ENCODE measurements at regions of chr9 and their contacts with region 1.

Region 1: DNA sequence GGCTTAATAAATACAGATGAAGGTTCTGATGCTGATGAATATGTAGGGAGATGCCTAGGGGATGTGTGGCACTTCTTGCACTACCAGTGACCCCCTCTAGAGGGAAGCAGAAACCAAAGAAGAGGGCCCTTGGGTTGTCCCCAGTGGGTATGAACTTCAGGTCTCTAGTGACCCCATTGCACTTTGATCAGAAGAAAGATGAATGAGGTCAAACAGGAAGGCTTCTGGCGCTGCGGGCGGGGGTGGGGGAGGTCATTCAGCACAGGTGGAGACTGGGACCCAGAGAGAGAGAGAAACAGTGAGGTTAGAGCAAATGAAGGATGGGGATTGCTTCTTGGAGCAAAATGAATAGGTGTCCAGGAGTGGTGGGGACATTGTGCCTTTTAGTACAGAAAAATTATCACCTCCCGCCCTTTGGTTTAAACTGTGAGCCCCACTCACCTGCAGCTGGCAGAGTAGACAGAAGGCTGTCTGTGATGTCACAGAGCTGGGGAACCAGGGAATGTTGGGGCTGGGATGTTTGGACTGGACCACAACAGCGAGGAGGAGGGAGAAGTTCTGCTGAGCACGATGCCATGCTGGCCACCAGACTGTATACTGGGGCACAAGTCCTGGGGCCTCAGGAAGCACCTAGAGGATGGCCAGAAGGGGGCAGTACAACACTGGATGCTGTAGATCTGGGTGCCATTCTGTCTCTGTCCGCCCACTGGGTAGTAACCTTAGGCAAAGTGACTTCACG is at the start of gene TEX48:
- DNase-seq: peak; percentile 64
- H3K4me3 ChIP-seq: peak within 1 kb of the TSS in 1 of 2 experiments; percentile 21; a peak in 1 of 4 replicates
- H3K27ac ChIP-seq: peak within 1 kb of the TSS in 1 of 2 experiments; percentile 23; a peak in 2 of 4 replicates
- H3K4me1 ChIP-seq: peaks cover 0 to 17% of the 10 kb centered on the region in 2 experiments; a peak in 3 of 4 replicates
- H3K27me3 ChIP-seq: no peaks in the 10 kb centered on the region
- CTCF ChIP-seq: peak; percentile 72
- EP300 ChIP-seq: no peak
- RAD21 ChIP-seq: peak; percentile 78
- polyA plus RNA-seq, gene TEX48: 0.41 and 0.46 TPM in 2 replicates

Region 2: GRCh38 chr9:114551883-114552685 is 129.7 kb before region 1 on chr9:
- CTCF ChIA-PET with region 1: no interaction called
- POLR2A ChIA-PET with region 1: no interaction called
- DNase-seq: peak; percentile 26
- H3K4me3 ChIP-seq: no peak overlapping the region
- H3K27ac ChIP-seq: peak overlapping the region in 1 of 2 experiments; percentile 86; a peak in 2 of 4 replicates
- H3K4me1 ChIP-seq: peaks cover 0 to 11% of the 10 kb centered on the region in 2 experiments; a peak in 2 of 4 replicates
- H3K27me3 ChIP-seq: no peaks in the 10 kb centered on the region
- CTCF ChIP-seq: no peak
- EP300 ChIP-seq: peak in 1 of 2 experiments; percentile 73; a peak in 2 of 4 replicates
- RAD21 ChIP-seq: no peak

Region 3: DNA sequence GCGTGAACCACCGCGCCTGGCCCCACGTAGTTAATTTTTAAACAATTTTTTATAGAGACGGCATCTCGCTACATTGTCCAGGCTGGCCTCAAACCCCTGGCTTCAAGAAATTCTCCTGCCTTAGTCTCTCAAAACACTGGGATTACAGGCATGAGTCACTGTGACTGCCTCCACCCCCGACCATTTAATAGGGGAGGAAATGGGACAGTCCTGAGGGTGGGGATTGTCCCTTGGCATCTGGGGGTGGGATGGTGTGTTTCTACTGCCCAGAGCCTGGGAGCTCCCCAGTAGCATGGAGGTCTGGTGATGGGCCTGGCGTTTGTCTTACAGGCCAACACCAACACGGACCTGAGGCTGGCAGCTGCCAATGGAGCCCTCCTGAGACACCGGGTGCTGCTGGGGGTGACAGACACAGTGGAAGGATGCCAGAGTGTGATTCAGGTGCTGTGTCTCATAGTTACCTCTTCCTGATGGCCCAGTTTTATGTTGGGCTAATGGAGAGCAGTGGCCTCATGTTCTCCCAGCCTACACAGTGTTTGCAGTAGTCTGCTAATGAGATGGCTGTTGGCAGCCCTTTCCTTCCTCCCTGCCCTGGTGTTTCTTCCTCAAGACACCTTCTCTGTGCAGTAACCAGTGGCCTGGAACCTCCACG is 48.2 kb before region 1 on chr9:
- CTCF ChIA-PET with region 1: no interaction called
- POLR2A ChIA-PET with region 1: no interaction called
- DNase-seq: no peak
- H3K4me3 ChIP-seq: no peak overlapping the region
- H3K27ac ChIP-seq: no peak overlapping the region
- H3K4me1 ChIP-seq: no peaks in the 10 kb centered on the region
- H3K27me3 ChIP-seq: no peaks in the 10 kb centered on the region
- CTCF ChIP-seq: no peak
- EP300 ChIP-seq: no peak
- RAD21 ChIP-seq: no peak

Region 4: DNA sequence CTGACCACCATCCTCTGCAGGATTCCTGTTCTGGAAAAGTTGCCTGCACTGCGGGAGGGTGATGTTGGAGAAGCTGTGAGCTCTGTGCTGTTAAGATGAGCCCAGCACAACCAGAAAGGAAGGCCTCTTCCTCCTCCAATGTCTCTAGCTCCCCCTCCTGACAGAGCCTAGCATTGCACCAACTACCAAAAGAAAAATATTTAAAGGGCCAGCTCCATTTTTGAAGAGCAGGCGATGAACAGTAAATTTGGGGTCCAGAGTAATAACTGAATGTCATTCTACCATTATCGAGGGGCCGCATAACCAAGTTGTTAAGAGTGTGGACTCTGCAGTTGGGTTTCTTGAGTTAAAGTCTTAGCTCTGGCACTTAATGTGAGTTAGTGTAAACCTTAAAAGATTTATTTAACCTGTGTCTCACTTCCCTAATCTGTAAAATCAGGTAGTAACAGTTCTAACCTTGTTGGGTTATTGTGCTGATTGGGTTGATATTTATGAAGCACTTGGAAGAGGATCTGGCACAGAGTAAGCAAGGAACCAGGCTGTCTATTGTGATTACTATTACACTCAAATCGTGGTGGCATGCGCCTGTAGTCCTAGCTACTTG is 28.1 kb before region 1 on chr9:
- CTCF ChIA-PET with region 1: interaction called, 10 read pairs
- POLR2A ChIA-PET with region 1: no interaction called
- DNase-seq: peak; percentile 69
- H3K4me3 ChIP-seq: no peak overlapping the region; a peak in 1 of 4 replicates
- H3K27ac ChIP-seq: no peak overlapping the region
- H3K4me1 ChIP-seq: peaks cover 0 to 5% of the 10 kb centered on the region in 2 experiments; a peak in 2 of 4 replicates
- H3K27me3 ChIP-seq: no peaks in the 10 kb centered on the region
- CTCF ChIP-seq: peak; percentile 93
- EP300 ChIP-seq: no peak
- RAD21 ChIP-seq: peak; percentile 92

Region 5: GRCh38 chr9:114669961-114670360 is 11.8 kb before region 1 on chr9:
- CTCF ChIA-PET with region 1: interaction called, 29 read pairs
- POLR2A ChIA-PET with region 1: no interaction called
- DNase-seq: no peak
- H3K4me3 ChIP-seq: no peak overlapping the region
- H3K27ac ChIP-seq: no peak overlapping the region
- H3K4me1 ChIP-seq: no peaks in the 10 kb centered on the region
- H3K27me3 ChIP-seq: no peaks in the 10 kb centered on the region
- CTCF ChIP-seq: no peak
- EP300 ChIP-seq: no peak
- RAD21 ChIP-seq: no peak

Region 6: GRCh38 chr9:114906908-114907571 is 225.3 kb after region 1 on chr9:
- CTCF ChIA-PET with region 1: interaction called, 42 read pairs
- POLR2A ChIA-PET with region 1: no interaction called
- DNase-seq: peak; percentile 45
- H3K4me3 ChIP-seq: no peak overlapping the region; a peak in 1 of 4 replicates
- H3K27ac ChIP-seq: no peak overlapping the region
- H3K4me1 ChIP-seq: peaks cover 7 to 38% of the 10 kb centered on the region in 2 experiments
- H3K27me3 ChIP-seq: no peaks in the 10 kb centered on the region
- CTCF ChIP-seq: peak; percentile 81
- EP300 ChIP-seq: no peak
- RAD21 ChIP-seq: peak; percentile 80

Region 7: DNA sequence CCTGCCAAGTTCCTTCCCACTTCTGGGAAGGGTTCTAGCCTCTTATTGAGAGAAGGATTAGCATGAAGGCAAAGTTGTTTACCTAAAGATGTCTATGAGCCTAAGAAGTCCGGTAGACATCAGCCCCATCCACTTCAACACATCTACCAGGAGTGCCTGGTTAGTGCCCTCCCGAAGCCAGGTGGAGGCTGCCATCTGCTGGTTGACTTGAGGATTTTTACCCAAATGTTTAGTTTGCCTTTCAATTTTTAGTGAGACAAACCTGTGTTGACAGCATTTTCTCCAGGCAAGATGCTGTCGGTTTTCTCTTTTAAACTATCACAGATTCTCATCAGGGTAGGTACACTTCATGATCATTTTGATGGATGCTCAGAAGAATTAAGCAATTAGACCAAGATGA is 332.2 kb after region 1 on chr9:
- CTCF ChIA-PET with region 1: interaction called, 16 read pairs
- POLR2A ChIA-PET with region 1: no interaction called
- DNase-seq: peak; percentile 72
- H3K4me3 ChIP-seq: no peak overlapping the region; a peak in 1 of 4 replicates
- H3K27ac ChIP-seq: no peak overlapping the region
- H3K4me1 ChIP-seq: 0 out of 4 replicates have a peak, but pooled peaks cover 0 to 5% of the 10 kb centered on the region in 2 experiments
- H3K27me3 ChIP-seq: no peaks in the 10 kb centered on the region
- CTCF ChIP-seq: peak; percentile 88
- EP300 ChIP-seq: no peak
- RAD21 ChIP-seq: peak; percentile 94

Region 8: GRCh38 chr9:115146581-115147021 is 464.8 kb after region 1 on chr9:
- CTCF ChIA-PET with region 1: no interaction called
- POLR2A ChIA-PET with region 1: no interaction called
- DNase-seq: no peak
- H3K4me3 ChIP-seq: no peak overlapping the region
- H3K27ac ChIP-seq: peak overlapping the region; percentile 68 to 82; a peak in 3 of 4 replicates
- H3K4me1 ChIP-seq: peaks cover 0 to 14% of the 10 kb centered on the region in 2 experiments; a peak in 2 of 4 replicates
- H3K27me3 ChIP-seq: no peaks in the 10 kb centered on the region
- CTCF ChIP-seq: no peak
- EP300 ChIP-seq: peak in 1 of 2 experiments; percentile 88; a peak in 2 of 4 replicates
- RAD21 ChIP-seq: no peak